ENCODE measurements at regions of chr21 and their contacts with region 1.

Region 1: DNA sequence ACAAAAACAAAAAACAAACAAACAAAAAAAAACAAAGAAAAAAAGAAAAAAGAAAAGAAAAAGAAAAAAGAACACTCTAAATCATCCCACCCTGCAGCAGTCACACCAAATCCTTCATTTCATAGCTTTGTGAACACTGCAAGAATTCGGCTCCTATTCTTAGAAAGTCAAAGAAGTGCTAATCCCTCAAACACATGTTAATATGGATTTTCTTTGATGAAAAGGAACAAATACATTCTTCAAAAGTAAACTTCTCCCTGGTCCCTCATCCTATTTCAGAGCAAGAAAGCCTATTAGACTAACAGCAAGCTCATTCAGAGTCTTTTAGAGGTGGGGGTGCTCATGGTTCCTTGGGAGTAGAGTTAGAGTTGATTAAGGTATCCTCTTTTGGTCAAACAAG is 7.2 kb upstream of the MRPL39 start:
- DNase-seq: no peak
- H3K4me3 ChIP-seq: no peak overlapping the region
- H3K27ac ChIP-seq: no peak overlapping the region
- H3K4me1 ChIP-seq: no peaks in the 10 kb centered on the region
- H3K27me3 ChIP-seq: no peaks in the 10 kb centered on the region

Region 2: DNA sequence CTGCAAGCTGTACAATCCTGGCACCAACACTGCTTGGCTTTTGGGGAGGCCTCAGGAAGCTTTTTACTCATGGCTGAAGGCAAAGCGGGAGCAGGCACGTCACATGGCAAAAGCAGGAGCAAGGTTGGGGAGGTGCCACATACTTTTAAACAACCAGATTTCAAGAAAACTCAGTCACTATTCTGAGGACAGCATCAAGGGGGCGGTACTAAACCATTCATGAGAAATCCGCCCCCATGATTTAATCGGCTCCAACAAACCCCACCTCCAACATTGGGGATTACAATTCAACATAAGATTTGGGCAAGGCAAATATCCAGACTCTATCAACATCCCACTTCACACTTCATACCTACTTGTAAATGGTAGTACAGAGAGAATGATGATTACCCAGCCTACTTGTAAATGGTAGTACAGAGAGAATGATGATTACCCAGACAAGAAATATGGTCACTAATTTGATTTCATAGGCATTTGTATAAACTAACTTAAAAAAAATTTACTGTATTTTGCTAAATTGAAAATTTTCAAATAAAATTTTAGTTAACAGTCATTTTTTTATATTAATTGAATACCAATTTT is 95.3 kb after region 1 on chr21:
- in situ Hi-C with region 1: loop called (anchors 5 kb)
- DNase-seq: peak; percentile 11
- H3K4me3 ChIP-seq: no peak overlapping the region
- H3K27ac ChIP-seq: no peak overlapping the region
- H3K4me1 ChIP-seq: no peaks in the 10 kb centered on the region
- H3K27me3 ChIP-seq: no peaks in the 10 kb centered on the region

Region 3: GRCh38 chr21:26099610-26100219 is 485.3 kb after region 1 on chr21:
- in situ Hi-C with region 1: no loop called
- DNase-seq: peak; percentile 84
- H3K4me3 ChIP-seq: peak overlapping the region; percentile 62
- H3K27ac ChIP-seq: peak overlapping the region; percentile 82
- H3K4me1 ChIP-seq: peaks cover 23% of the 10 kb centered on the region
- H3K27me3 ChIP-seq: no peaks in the 10 kb centered on the region

Measured in GM23248 (cell line).